Activated CD4-positive, alpha-beta T cell treated with anti-CD3 and anti-CD28 coated beads for 36 hours (primary cell): ENCODE measurements at regions of chr1 and their contacts with region 1.

Region 1: DNA sequence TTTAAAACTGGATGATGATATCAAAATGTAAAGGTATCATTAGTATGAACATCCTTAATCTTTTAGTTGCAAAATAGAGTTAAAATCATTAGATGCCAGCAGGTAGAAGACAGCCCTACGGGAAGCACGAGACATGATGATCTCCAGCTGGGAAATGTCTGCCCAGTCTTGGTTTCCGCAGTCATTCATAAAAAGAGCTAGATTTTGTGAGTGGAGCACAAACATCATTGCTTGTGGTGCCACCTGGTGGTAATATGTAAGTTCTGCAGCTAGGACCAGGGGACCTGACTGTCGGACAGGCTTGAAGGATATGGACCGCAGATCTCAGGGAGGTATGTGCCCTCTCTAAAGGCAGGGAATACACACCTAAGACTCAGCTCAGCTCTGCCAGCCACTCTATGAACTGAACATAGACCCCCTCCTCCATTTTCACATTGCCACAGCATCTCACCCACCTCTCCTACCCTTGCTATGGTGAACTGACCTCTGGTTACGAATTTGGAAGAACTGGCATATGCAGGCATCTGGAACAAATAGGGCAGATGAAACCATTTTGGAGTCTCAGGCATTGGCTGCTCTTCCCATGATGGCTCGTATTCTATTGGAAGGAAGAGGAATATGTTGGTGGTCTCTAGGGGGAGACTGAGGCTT is 9.2 kb downstream of the FCMR start:
- DNase-seq: peak; percentile 76
- ATAC-seq: peak; percentile 39
- H3K4me3 Mint-ChIP-seq: no peak overlapping the region
- H3K27ac Mint-ChIP-seq: no peak overlapping the region
- H3K4me1 Mint-ChIP-seq: peaks cover 88% of the 10 kb centered on the region
- H3K27me3 Mint-ChIP-seq: no peaks in the 10 kb centered on the region

Region 2: DNA sequence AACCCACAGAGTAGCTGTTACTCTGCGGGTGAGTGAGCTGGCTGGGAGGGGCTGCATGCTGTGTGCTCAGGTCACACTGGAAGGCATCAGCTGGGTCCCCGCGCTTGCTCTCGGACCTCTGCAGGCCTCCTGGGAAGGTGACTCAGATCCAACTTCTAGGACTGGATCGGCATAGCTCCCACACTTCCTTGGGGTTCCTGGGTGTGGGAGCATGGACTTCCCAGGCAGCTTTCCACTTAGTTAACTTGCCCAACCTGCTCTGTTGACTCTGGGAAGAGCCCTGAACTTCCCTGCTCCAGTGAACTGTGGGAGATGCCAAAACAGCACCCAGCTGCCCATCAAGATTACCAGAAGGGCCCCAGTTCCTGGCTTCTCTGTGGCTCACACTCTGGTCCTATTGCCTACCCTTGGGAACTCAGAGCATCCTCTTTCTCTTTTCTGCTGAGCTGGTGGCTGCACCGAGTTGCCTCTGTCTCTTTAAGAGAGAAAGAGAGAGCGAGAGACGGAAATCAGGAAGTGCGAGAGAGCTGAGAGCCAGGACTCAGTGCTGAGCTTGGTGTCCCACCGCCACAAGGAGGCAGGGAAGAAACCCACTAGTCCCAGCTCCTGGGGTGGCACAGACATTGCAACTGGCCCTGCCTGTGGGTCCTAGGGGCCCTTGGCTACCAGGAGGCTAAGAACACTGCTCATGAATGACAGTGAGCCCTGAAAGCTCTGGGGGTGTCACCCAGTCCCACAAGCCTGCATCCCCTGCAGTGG is 442.5 kb before region 1 on chr1 and contains the start of gene IKBKE:
- CTCF ChIA-PET with region 1: interaction called, 6 read pairs
- POLR2A ChIA-PET with region 1: no interaction called
- intact Hi-C with region 1: loop called in 1 of 2 experiments (anchors 10 kb)
- DNase-seq: peak; percentile 74
- ATAC-seq: peak; percentile 53
- H3K4me3 Mint-ChIP-seq: peak within 1 kb of the TSS; percentile 83
- H3K27ac Mint-ChIP-seq: peak within 1 kb of the TSS; percentile 91
- H3K4me1 Mint-ChIP-seq: peaks cover 92% of the 10 kb centered on the region
- H3K27me3 Mint-ChIP-seq: no peaks in the 10 kb centered on the region
- total RNA-seq, gene IKBKE: 15.3 to 17.2 TPM

Region 3: DNA sequence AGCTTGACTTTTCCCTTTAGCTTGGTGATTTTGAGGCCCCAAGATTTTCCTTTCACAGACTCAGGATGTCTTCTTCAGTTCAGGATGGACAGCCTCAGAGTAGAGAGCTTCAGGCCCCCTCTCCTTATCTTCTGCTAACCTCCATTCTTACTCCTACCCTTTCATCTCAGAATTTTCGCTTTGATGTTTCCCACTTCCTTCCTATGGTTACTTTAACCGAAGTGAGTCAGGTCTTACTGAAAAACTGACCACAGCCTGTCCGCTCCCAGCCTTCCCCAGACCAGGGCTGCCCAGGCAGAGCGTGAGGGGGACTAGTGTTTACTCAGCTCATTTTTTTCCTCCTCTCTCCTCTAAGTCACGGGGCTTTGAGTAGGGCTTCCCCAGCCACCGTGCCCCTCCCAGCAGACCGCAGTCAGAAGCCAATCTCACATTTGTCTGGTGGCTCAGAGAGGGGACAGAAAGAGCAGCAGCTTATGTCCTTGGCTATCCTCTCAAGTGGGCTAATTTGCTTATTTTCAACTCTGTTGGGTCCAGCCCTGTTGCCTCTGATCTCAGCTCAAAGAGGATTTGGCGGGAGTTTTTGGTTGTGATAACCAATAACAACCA is 146.2 kb before region 1 on chr1:
- CTCF ChIA-PET with region 1: interaction called, 21 read pairs
- POLR2A ChIA-PET with region 1: no interaction called
- intact Hi-C with region 1: no loop called
- DNase-seq: peak; percentile 82
- ATAC-seq: peak; percentile 64
- H3K4me3 Mint-ChIP-seq: peak overlapping the region; percentile 29
- H3K27ac Mint-ChIP-seq: peak overlapping the region; percentile 44
- H3K4me1 Mint-ChIP-seq: peaks cover 63% of the 10 kb centered on the region
- H3K27me3 Mint-ChIP-seq: peaks cover 10% of the 10 kb centered on the region

Region 4: DNA sequence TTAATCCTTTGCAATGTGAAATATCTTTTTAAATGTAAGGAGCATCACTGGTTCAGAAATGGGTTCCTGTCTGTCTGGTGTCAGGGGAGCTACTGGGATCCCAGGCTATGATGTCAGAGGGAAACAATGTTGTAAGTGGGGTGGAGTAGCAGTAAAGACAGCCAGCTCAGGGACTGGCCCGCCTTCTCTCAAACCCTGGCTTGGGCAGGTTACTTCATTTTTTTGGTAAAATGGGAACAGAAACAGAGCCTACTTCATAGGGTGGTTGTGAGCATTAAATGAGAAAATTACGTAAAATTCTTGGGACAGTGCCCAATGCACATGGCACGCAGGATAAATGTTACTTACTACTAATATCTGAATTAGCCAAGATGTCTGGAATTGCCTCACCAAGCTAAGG is 77.9 kb before region 1 on chr1:
- CTCF ChIA-PET with region 1: interaction called, 10 read pairs
- POLR2A ChIA-PET with region 1: no interaction called
- intact Hi-C with region 1: no loop called
- DNase-seq: no peak
- ATAC-seq: no peak
- H3K4me3 Mint-ChIP-seq: no peak overlapping the region
- H3K27ac Mint-ChIP-seq: no peak overlapping the region
- H3K4me1 Mint-ChIP-seq: peaks cover 5% of the 10 kb centered on the region
- H3K27me3 Mint-ChIP-seq: peaks cover 2% of the 10 kb centered on the region

Region 5: DNA sequence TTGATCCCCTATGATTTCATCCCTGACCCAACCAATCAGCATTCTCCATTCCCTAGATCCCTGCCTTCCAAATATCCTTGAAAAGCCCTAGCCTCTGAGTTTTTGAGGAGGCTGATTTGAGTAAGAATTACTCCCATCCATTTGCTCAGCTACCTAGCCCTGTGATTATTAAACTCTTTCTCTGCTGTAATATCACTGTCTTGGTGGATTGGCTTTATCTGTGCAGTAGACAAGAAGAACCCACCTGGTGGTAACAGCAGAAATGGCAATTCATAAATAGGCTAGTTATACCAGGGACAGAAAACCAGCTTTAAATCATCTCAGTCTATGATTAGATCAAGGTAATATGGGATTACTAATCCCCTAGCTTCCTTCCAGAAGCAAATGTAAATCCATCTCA is 34.1 kb before region 1 on chr1:
- CTCF ChIA-PET with region 1: interaction called, 30 read pairs
- POLR2A ChIA-PET with region 1: no interaction called
- intact Hi-C with region 1: no loop called
- DNase-seq: no peak
- ATAC-seq: no peak
- H3K4me3 Mint-ChIP-seq: no peak overlapping the region
- H3K27ac Mint-ChIP-seq: no peak overlapping the region
- H3K4me1 Mint-ChIP-seq: peaks cover 10% of the 10 kb centered on the region
- H3K27me3 Mint-ChIP-seq: no peaks in the 10 kb centered on the region

Region 6: DNA sequence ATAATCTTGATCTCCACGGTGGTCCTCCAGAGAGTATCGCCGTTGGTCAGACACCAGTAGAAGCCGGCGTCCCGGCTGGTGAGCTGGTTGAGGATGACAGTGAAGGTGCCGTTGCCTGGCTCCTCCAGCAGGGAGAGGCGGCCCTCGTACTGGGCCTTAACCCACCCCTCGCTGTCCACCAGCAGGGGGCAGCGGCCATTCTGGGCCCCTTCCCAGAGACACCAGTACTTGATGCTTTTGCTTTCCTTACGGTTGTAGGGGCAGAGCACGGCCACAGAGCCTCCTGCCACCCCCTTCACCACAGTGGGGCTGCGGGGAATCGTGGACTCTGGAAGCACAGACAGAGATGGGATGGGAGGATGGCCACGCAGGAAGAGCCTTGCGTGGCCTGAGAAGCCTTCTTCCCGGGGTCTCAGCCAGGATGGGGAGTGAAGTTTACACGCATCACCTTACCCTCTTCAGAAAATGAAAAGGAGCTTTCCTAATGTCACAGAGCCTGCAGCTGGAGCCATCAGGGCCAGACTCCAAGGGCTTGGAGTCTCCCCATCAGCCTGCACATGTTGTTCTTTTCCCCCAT is 23.0 kb after region 1 on chr1:
- CTCF ChIA-PET with region 1: interaction called, 200 read pairs
- POLR2A ChIA-PET with region 1: no interaction called
- intact Hi-C with region 1: loop called in 1 of 2 experiments (anchors 1 kb)
- DNase-seq: peak; percentile 79
- ATAC-seq: peak; percentile 76
- H3K4me3 Mint-ChIP-seq: no peak overlapping the region
- H3K27ac Mint-ChIP-seq: no peak overlapping the region
- H3K4me1 Mint-ChIP-seq: peaks cover 23% of the 10 kb centered on the region
- H3K27me3 Mint-ChIP-seq: no peaks in the 10 kb centered on the region

Region 7: DNA sequence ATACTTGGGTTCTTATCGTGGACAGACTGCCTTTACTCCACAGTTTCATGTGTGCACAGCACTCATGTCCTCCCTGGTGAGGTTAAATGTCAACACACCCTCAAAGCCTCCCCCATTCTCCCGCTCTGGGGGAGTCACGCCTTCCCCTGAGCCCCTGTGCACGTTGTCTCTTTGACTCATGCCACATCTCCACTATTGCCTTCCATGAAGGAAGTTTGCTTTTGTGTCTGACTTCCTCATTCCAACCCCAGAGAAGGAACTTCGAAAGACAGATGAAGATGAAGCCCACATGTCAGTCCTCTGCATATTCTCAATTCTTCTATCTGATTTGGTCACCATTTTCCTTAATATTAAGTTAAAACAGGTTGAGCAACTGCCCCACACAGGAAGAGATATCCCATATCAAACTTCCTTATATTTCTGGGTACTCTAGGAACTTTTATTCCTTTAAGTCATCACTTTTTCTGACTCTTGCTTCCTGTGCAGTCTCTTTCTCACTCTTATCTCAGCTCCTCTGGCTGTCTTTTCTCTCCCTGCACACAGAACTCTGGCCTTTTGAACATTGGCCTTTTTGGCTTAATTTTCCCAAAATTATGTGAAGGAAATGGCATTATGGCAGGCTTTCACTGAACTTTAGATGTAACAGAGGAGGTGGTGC is 233.0 kb after region 1 on chr1:
- CTCF ChIA-PET with region 1: no interaction called
- POLR2A ChIA-PET with region 1: no interaction called
- intact Hi-C with region 1: no loop called
- DNase-seq: no peak
- ATAC-seq: no peak
- H3K4me3 Mint-ChIP-seq: no peak overlapping the region
- H3K27ac Mint-ChIP-seq: no peak overlapping the region
- H3K4me1 Mint-ChIP-seq: no peaks in the 10 kb centered on the region
- H3K27me3 Mint-ChIP-seq: peaks cover 4% of the 10 kb centered on the region